Activated CD4-positive, alpha-beta T cell treated with anti-CD3 and anti-CD28 coated beads for 36 hours (primary cell): ENCODE measurements at regions of chr2 and their contacts with region 1.

Region 1: GRCh38 chr2:64453770-64454385 is at the start of gene LGALSL:
- DNase-seq: peak; percentile 68
- ATAC-seq: peak; percentile 77
- H3K4me3 Mint-ChIP-seq: peak within 1 kb of the TSS; percentile 76
- H3K27ac Mint-ChIP-seq: peak within 1 kb of the TSS; percentile 62
- H3K4me1 Mint-ChIP-seq: peaks cover 5% of the 10 kb centered on the region
- H3K27me3 Mint-ChIP-seq: peaks cover 19% of the 10 kb centered on the region
- total RNA-seq, gene LGALSL: 1.9 to 2.2 TPM

Region 2: GRCh38 chr2:64311948-64312621 is 141.8 kb before region 1 on chr2:
- CTCF ChIA-PET with region 1: no interaction called
- POLR2A ChIA-PET with region 1: interaction called, 14 read pairs
- intact Hi-C with region 1: no loop called
- DNase-seq: peak; percentile 10
- ATAC-seq: no peak
- H3K4me3 Mint-ChIP-seq: no peak overlapping the region
- H3K27ac Mint-ChIP-seq: no peak overlapping the region
- H3K4me1 Mint-ChIP-seq: no peaks in the 10 kb centered on the region
- H3K27me3 Mint-ChIP-seq: no peaks in the 10 kb centered on the region

Region 3: GRCh38 chr2:64913357-64913869 is 459.5 kb after region 1 on chr2:
- CTCF ChIA-PET with region 1: no interaction called
- POLR2A ChIA-PET with region 1: no interaction called
- intact Hi-C with region 1: no loop called
- DNase-seq: peak; percentile 52
- ATAC-seq: no peak
- H3K4me3 Mint-ChIP-seq: no peak overlapping the region
- H3K27ac Mint-ChIP-seq: no peak overlapping the region
- H3K4me1 Mint-ChIP-seq: peaks cover 19% of the 10 kb centered on the region
- H3K27me3 Mint-ChIP-seq: no peaks in the 10 kb centered on the region